ENCODE measurements at regions of chr9 and their contacts with region 1.

Region 1: GRCh38 chr9:112717661-112718341 is at the start of gene INIP:
- DNase-seq: peak; percentile 95
- ATAC-seq: peak; percentile 93
- H3K4me3 Mint-ChIP-seq: peak within 1 kb of the TSS; percentile 100
- H3K27ac Mint-ChIP-seq: peak within 1 kb of the TSS; percentile 98
- H3K4me1 Mint-ChIP-seq: peaks cover 19% of the 10 kb centered on the region
- H3K27me3 Mint-ChIP-seq: no peaks in the 10 kb centered on the region
- CTCF ChIP-seq: no peak
- total RNA-seq, gene INIP: 31.1 and 32.1 TPM in 2 replicates

Region 2: DNA sequence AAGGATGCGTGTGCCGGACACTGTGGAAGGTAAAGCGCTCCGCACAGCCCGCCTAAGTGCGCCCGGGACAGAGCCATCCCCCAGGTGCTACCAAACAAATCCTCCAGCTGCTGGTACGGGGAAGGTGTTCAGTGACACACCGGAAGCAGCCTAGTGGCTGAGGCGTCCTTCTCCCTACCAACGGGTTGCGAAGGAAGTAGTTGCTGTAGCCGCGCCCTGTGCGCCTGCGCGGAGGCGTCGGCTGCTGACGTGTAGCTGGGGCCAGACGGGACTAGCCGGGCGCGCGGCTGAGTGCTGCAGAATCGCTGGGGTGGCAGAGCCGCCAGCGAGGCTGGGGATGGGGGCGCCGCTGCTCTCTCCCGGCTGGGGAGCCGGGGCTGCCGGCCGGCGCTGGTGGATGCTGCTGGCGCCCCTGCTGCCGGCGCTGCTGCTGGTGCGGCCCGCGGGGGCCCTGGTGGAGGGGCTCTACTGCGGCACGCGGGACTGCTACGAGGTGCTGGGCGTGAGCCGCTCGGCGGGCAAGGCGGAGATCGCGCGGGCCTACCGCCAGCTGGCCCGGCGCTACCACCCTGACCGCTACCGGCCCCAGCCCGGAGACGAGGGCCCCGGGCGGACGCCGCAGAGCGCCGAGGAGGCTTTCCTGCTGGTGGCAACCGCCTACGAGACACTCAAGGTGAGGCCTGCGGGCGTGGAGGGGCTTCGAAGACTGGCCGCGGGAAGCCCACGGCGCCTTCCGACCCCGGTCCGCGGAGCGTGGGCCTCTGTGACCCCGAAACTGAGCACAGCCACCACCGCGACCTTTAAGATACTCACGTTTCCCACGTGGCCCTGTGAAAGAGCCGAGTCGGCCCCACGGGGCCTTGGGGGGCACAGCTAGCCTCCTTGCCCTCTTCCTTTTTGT is 1086.5 kb before region 1 on chr9 and contains the start of gene DNAJC25:
- CTCF ChIA-PET with region 1: no interaction called
- POLR2A ChIA-PET with region 1: interaction called, 3 read pairs
- intact Hi-C with region 1: loop called (anchors 2 kb)
- DNase-seq: peak; percentile 91
- ATAC-seq: peak; percentile 94
- H3K4me3 Mint-ChIP-seq: peak within 1 kb of the TSS; percentile 95
- H3K27ac Mint-ChIP-seq: peak within 1 kb of the TSS; percentile 89
- H3K4me1 Mint-ChIP-seq: peaks cover 29% of the 10 kb centered on the region
- H3K27me3 Mint-ChIP-seq: no peaks in the 10 kb centered on the region
- CTCF ChIP-seq: no peak
- total RNA-seq, gene DNAJC25: 3.5 and 4.3 TPM in 2 replicates

Region 3: DNA sequence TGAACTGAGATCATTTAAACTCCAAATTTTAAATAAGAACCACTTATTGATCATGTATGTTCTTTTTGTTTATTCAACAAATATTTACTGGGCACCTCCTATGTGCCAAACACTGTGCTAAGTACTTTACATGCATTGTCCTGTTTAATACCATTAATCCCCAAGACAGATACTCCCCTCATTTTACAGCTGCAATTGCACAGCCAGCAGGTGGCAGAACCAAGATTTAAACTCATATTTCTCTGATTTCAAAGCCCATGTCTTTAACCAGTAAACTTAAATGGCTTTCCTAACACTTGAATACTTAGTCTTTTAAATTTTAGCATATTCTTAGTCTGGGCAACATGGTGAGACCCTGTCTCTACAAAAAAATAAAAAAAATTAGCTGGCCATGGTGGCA is 274.6 kb before region 1 on chr9:
- CTCF ChIA-PET with region 1: no interaction called
- POLR2A ChIA-PET with region 1: no interaction called
- intact Hi-C with region 1: loop called (anchors 10 kb)
- DNase-seq: no peak
- ATAC-seq: no peak
- H3K4me3 Mint-ChIP-seq: no peak overlapping the region
- H3K27ac Mint-ChIP-seq: no peak overlapping the region
- H3K4me1 Mint-ChIP-seq: peaks cover 30% of the 10 kb centered on the region
- H3K27me3 Mint-ChIP-seq: no peaks in the 10 kb centered on the region
- CTCF ChIP-seq: no peak

Region 4: DNA sequence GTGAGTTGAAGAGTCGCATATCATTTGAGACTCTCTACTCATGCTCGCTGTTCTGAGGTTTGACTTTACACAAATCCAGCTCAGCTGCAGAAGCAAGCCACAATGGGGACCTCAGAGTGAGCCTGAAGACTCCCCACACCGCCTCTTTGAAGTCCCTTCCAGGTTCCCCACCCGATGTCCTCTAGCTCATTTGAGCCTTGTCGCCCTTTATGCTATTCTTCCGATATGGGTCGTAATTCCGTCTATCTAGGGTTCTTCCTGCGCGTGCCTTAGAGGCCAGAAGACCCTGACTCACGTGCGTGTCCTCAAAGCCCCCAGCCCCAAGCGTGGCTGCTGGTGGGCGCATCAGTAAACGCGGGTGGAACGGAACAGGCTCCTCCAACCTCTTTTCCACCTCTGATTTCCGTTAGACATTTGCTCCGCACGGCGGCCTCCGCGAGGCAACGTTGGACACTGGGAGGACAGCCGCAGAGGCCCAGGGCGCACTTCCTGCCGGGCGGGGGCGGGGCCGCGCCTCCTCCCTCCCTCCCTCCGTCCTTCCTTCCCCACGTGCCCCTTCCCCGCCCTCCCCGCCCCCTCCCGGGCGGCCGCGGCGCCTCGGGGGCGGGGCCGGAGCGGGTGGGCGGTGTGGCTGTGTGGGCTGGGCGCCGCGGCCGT is 32.4 kb after region 1 on chr9 and contains the start of gene SNX30:
- CTCF ChIA-PET with region 1: interaction called, 3 read pairs
- POLR2A ChIA-PET with region 1: interaction called, 12 read pairs
- intact Hi-C with region 1: loop called (anchors 1 kb)
- DNase-seq: peak; percentile 90
- ATAC-seq: peak; percentile 90
- H3K4me3 Mint-ChIP-seq: peak within 1 kb of the TSS; percentile 93
- H3K27ac Mint-ChIP-seq: peak within 1 kb of the TSS; percentile 94
- H3K4me1 Mint-ChIP-seq: peaks cover 42% of the 10 kb centered on the region
- H3K27me3 Mint-ChIP-seq: no peaks in the 10 kb centered on the region
- CTCF ChIP-seq: no peak
- total RNA-seq, gene SNX30: 6.1 and 6.5 TPM in 2 replicates

Region 5: DNA sequence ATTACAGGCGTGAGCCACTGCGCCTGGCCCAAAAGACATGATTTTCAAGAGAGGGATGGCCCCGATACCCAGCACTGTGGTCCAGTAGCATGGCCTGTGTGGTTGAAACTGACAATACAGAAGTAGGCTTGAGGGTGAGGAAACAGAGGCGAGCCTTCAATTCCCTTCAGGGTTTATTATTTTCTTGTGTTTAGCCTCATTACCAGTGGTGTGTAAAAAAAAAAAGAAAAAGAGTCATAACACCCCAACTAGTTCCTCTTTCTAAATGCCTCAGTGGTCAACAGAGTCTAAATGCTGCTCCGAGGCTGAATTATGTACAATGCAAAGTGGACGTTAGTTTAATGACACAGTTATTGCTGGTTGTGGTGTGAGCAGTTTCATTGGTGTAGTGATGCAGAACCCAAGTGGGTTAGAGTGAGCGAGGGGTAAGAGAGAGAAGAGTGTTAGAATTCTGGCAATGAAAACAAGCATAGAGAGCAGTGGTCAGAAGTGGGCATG is 91.6 kb after region 1 on chr9:
- CTCF ChIA-PET with region 1: no interaction called
- POLR2A ChIA-PET with region 1: interaction called, 3 read pairs
- intact Hi-C with region 1: loop called (anchors 1 kb)
- DNase-seq: no peak
- ATAC-seq: peak; percentile 93
- H3K4me3 Mint-ChIP-seq: no peak overlapping the region
- H3K27ac Mint-ChIP-seq: no peak overlapping the region
- H3K4me1 Mint-ChIP-seq: peaks cover 23% of the 10 kb centered on the region
- H3K27me3 Mint-ChIP-seq: peaks cover 10% of the 10 kb centered on the region
- CTCF ChIP-seq: no peak

Region 6: DNA sequence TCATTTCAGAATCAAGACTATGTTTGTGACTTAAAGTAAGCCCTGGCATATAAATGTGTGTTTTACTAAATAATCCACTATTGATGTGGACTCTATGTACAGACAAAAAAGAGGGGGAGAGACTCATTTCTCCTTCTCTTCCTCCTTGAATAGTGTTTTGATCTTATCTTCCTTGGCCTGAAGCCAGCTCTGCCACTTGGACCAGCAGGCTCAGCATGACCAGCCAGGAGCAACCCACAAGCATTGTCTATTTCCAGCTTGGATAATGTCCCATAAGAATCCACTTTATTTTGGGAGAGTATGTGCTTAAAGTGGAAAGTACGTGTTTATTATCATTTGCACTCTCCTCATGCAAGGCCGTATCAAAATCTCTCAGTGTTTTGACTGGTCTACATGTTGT is 196.7 kb after region 1 on chr9:
- CTCF ChIA-PET with region 1: no interaction called
- POLR2A ChIA-PET with region 1: no interaction called
- intact Hi-C with region 1: no loop called
- DNase-seq: no peak
- ATAC-seq: no peak
- H3K4me3 Mint-ChIP-seq: no peak overlapping the region
- H3K27ac Mint-ChIP-seq: no peak overlapping the region
- H3K4me1 Mint-ChIP-seq: no peaks in the 10 kb centered on the region
- H3K27me3 Mint-ChIP-seq: peaks cover 14% of the 10 kb centered on the region
- CTCF ChIP-seq: no peak

Region 7: DNA sequence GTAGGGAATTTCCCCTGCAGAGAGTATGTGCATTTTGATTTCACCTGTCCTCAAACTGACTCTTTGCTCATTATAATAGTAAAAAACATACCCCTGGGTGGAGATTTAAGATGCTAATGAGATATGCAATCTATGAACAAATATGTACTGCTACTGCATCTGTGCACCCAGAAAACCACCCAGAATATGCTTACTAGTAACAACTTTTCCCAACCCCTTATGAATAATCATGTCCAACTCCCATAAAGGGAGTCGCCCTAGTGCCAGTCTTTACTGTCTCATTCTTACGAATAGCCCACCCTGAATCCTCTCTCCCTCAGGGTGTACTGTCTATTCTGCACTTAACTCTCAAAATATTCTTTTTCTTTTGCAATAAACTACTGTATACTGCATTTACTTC is 377.8 kb after region 1 on chr9:
- CTCF ChIA-PET with region 1: no interaction called
- POLR2A ChIA-PET with region 1: no interaction called
- intact Hi-C with region 1: no loop called
- DNase-seq: no peak
- ATAC-seq: no peak
- H3K4me3 Mint-ChIP-seq: no peak overlapping the region
- H3K27ac Mint-ChIP-seq: no peak overlapping the region
- H3K4me1 Mint-ChIP-seq: no peaks in the 10 kb centered on the region
- H3K27me3 Mint-ChIP-seq: peaks cover 58% of the 10 kb centered on the region
- CTCF ChIP-seq: no peak